PC-9 (cell line): ENCODE measurements at regions of chr21 and their contacts with region 1.

Region 1: DNA sequence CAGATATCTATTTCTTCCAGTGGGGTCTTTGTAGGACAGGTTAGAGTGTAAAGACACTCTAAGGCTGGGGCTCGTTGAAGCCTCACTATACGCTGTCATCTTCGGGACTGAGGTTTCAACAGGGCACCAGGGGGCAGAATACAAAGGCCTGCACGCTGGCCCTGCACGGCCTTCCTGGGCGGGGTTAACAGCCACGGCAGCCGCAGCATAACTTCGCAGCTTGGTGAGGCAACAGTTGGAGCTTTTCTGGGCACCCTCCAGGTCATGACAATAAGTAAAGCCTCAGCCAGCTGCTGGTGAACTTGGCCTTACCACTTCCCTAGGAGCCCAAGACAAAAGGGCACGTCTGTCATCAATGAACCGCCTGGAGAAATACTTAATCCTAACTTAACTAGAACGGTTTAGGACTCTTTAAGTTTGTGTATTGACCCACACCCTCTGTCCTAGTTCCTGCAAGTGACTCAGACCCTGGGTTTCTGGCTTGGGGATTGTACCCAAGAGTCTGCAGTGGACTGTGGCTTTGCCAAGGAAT is 2.3 kb upstream of the RUNX1 start:
- DNase-seq: peak; percentile 86 to 95
- H3K4me3 ChIP-seq: peak overlapping the region; percentile 17; the same call in 1 of the 2 replicates
- H3K27ac ChIP-seq: peak overlapping the region; percentile 99
- H3K4me1 ChIP-seq: peaks cover 40% of the 10 kb centered on the region
- H3K27me3 ChIP-seq: no peaks in the 10 kb centered on the region
- CTCF ChIP-seq: peak; percentile 71

Region 2: DNA sequence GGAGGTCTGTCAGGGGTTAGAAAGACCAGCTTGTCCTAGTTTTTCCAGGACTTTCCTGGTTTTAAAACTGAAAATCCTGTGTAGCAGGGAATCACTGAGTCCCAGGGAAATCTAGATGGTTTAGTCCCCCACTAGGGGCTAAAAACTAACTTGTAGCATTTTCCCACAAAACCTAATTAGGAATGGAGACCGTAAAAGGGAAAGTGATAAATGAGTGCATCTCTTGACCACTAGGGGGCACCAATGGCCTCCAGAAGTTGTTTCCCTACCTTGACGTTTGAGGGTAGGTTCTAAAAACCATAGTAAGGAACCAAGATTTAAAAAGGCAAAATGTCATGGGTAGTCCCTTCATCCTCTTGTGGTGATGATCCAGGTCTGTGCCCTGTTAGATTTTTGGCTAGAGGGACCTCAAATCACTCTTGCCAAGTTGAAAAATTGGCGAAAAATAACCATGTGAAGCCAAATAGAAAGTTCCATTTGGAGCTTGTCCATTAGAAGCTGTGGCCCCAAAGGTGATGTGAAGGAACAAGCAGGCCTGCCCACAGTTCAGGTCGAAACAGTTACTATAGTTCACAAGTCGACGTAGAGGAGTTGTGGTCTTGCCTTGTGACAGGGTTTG is 358.1 kb before region 1 on chr21:
- CTCF ChIA-PET with region 1: interaction called, 3 read pairs
- POLR2A ChIA-PET with region 1: no interaction called
- intact Hi-C with region 1: loop called (anchors 1 kb)
- DNase-seq: peak; percentile 39
- H3K4me3 ChIP-seq: no peak overlapping the region
- H3K27ac ChIP-seq: 0 out of 2 replicates have a peak overlapping the region, but pooled peaks have one; percentile 89
- H3K4me1 ChIP-seq: peaks cover 38% of the 10 kb centered on the region
- H3K27me3 ChIP-seq: no peaks in the 10 kb centered on the region
- CTCF ChIP-seq: peak; percentile 86

Region 3: DNA sequence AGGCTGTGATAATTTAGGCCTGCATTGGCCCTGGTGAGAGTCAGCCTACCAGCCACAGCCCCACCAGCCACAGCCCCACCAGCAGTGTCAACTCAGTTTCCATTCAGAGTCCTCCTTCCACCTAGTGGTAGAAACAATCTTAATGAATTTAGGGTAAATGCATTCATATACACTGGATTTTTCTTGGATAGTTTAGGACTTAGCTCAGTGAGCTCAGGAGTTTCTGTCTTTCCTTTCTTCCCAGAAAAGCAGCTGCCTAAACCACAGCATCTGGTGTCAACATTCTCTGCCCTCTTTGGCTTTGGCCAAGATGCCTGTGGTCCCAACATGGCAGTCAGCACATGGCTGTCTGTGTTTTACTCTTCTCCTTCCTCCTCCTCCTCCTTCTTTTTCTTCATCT is 288.6 kb before region 1 on chr21:
- CTCF ChIA-PET with region 1: no interaction called
- POLR2A ChIA-PET with region 1: no interaction called
- intact Hi-C with region 1: no loop called
- DNase-seq: no peak
- H3K4me3 ChIP-seq: no peak overlapping the region
- H3K27ac ChIP-seq: no peak overlapping the region
- H3K4me1 ChIP-seq: no peaks in the 10 kb centered on the region
- H3K27me3 ChIP-seq: no peaks in the 10 kb centered on the region
- CTCF ChIP-seq: no peak

Region 4: DNA sequence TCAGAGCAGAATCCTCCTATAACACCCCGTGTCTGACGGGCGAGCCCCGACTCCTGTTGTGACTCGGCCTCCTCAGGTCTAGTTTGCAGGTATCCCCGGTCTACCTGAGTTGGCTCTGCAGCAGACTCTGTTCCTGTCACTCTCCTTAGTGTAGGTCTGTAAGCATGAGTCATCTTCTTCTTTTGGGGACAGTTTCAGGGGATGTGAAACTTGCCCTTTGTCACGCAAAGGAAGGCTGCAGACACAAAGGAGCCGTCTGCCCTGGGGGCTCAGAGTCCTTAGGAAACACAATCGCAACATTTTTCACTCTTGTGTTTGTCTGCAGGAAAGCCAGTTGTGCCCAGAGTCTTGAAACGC is 185.4 kb before region 1 on chr21:
- CTCF ChIA-PET with region 1: no interaction called
- POLR2A ChIA-PET with region 1: interaction called, 20 read pairs
- intact Hi-C with region 1: no loop called
- DNase-seq: peak; percentile 69 to 89
- H3K4me3 ChIP-seq: 0 out of 2 replicates have a peak overlapping the region, but pooled peaks have one; percentile 11
- H3K27ac ChIP-seq: peak overlapping the region; percentile 88
- H3K4me1 ChIP-seq: peaks cover 69% of the 10 kb centered on the region
- H3K27me3 ChIP-seq: no peaks in the 10 kb centered on the region
- CTCF ChIP-seq: no peak

Region 5: GRCh38 chr21:34983680-34984086 is 67.7 kb before region 1 on chr21:
- CTCF ChIA-PET with region 1: no interaction called
- POLR2A ChIA-PET with region 1: interaction called, 25 read pairs
- intact Hi-C with region 1: no loop called
- DNase-seq: no peak
- H3K4me3 ChIP-seq: no peak overlapping the region
- H3K27ac ChIP-seq: peak overlapping the region; percentile 83
- H3K4me1 ChIP-seq: peaks cover 28% of the 10 kb centered on the region
- H3K27me3 ChIP-seq: no peaks in the 10 kb centered on the region
- CTCF ChIP-seq: no peak

Region 6: GRCh38 chr21:35084869-35085268 is 33.5 kb after region 1 on chr21:
- CTCF ChIA-PET with region 1: no interaction called
- POLR2A ChIA-PET with region 1: no interaction called
- intact Hi-C with region 1: no loop called
- DNase-seq: peak in 1 of 2 experiments; percentile 54
- H3K4me3 ChIP-seq: no peak overlapping the region
- H3K27ac ChIP-seq: peak overlapping the region; percentile 57
- H3K4me1 ChIP-seq: peaks cover 18% of the 10 kb centered on the region
- H3K27me3 ChIP-seq: no peaks in the 10 kb centered on the region
- CTCF ChIP-seq: no peak

Region 7: GRCh38 chr21:35120631-35121186 is 69.4 kb after region 1 on chr21:
- CTCF ChIA-PET with region 1: no interaction called
- POLR2A ChIA-PET with region 1: no interaction called
- intact Hi-C with region 1: no loop called
- DNase-seq: no peak
- H3K4me3 ChIP-seq: no peak overlapping the region
- H3K27ac ChIP-seq: no peak overlapping the region
- H3K4me1 ChIP-seq: no peaks in the 10 kb centered on the region
- H3K27me3 ChIP-seq: no peaks in the 10 kb centered on the region
- CTCF ChIP-seq: no peak

Region 8: GRCh38 chr21:35198031-35198431 is 146.7 kb after region 1 on chr21:
- CTCF ChIA-PET with region 1: no interaction called
- POLR2A ChIA-PET with region 1: no interaction called
- intact Hi-C with region 1: loop called (anchors 2 kb)
- DNase-seq: peak; percentile 48 to 97
- H3K4me3 ChIP-seq: peak overlapping the region; percentile 22; the same call in 1 of the 2 replicates
- H3K27ac ChIP-seq: peak overlapping the region; percentile 100
- H3K4me1 ChIP-seq: peaks cover 48% of the 10 kb centered on the region
- H3K27me3 ChIP-seq: no peaks in the 10 kb centered on the region
- CTCF ChIP-seq: no peak

Region 9: GRCh38 chr21:35256467-35256988 is 205.2 kb after region 1 on chr21:
- CTCF ChIA-PET with region 1: interaction called, 4 read pairs
- POLR2A ChIA-PET with region 1: interaction called, 6 read pairs
- intact Hi-C with region 1: loop called (anchors 1 kb)
- DNase-seq: peak; percentile 86 to 98
- H3K4me3 ChIP-seq: peak overlapping the region; percentile 42; the same call in 1 of the 2 replicates
- H3K27ac ChIP-seq: peak overlapping the region; percentile 99
- H3K4me1 ChIP-seq: peaks cover 37% of the 10 kb centered on the region
- H3K27me3 ChIP-seq: no peaks in the 10 kb centered on the region
- CTCF ChIP-seq: no peak

Region 10: GRCh38 chr21:35508139-35508888 is 457.0 kb after region 1 on chr21:
- CTCF ChIA-PET with region 1: interaction called, 6 read pairs
- POLR2A ChIA-PET with region 1: no interaction called
- intact Hi-C with region 1: loop called (anchors 1 kb)
- DNase-seq: peak; percentile 61 to 85
- H3K4me3 ChIP-seq: no peak overlapping the region
- H3K27ac ChIP-seq: no peak overlapping the region; the same call in 1 of the 2 replicates
- H3K4me1 ChIP-seq: peaks cover 42% of the 10 kb centered on the region
- H3K27me3 ChIP-seq: no peaks in the 10 kb centered on the region
- CTCF ChIP-seq: peak; percentile 68

Region 11: GRCh38 chr21:36487641-36488307 is 1436.4 kb after region 1 on chr21:
- CTCF ChIA-PET with region 1: no interaction called
- POLR2A ChIA-PET with region 1: no interaction called
- intact Hi-C with region 1: no loop called
- DNase-seq: no peak
- H3K4me3 ChIP-seq: no peak overlapping the region
- H3K27ac ChIP-seq: no peak overlapping the region
- H3K4me1 ChIP-seq: no peaks in the 10 kb centered on the region
- H3K27me3 ChIP-seq: no peaks in the 10 kb centered on the region
- CTCF ChIP-seq: no peak